Testis (tissue), 5 donors: ENCODE measurements at regions of chr11 and their contacts with region 1.

Region 1: GRCh38 chr11:1515082-1516060 is 28.8 kb upstream of the MOB2 start:
- DNase-seq: peak; percentile 82
- H3K4me3 ChIP-seq: no peak overlapping the region
- H3K27ac ChIP-seq: no peak overlapping the region
- H3K4me1 ChIP-seq: peaks cover 27% of the 10 kb centered on the region
- H3K27me3 ChIP-seq: no peaks in the 10 kb centered on the region
- CTCF ChIP-seq: peak; percentile 91 to 96 (median 92)
- POLR2A ChIP-seq: no peak

Region 2: DNA sequence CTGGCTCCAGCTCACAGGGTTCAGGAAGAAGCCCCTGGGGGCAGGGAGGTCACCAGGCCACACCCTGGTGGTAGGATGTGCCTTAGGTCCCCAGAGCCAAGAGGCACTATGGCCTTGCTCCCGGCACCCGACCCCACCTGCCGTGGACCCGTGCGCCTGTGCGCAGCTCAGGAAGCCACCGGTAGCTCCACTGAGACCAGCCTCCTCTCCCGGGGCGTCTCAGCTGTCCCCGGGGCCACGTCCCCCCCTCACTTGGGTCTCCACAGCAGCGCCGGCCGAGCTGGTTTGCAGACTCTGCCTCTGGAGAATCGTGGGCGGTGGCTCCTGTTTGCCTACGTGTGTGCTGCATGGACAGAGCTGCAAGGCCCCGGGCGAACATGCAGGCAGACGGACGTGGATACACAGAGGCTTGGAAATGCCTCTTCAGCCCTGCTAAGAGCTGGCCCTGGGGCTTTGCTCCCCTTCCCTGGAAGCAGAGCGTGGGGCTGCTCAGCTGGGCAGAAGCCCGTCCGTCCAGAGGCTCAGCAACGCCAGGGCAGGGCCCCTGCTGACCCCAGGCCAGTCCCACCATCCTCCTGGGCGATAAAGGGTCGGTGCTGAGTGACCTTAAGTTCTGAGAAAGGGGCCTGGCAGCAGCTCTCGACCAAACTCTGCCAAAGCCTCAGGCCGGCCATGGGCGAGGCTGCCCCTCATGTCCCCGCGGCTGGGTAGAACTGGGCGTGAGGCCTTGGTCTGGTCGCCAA is 307.8 kb before region 1 on chr11:
- intact Hi-C with region 1: loop called (anchors 5 kb)
- DNase-seq: no peak
- H3K4me3 ChIP-seq: no peak overlapping the region
- H3K27ac ChIP-seq: no peak overlapping the region
- H3K4me1 ChIP-seq: no peaks in the 10 kb centered on the region
- H3K27me3 ChIP-seq: no peaks in the 10 kb centered on the region
- CTCF ChIP-seq: no peak
- POLR2A ChIP-seq: no peak

Region 3: GRCh38 chr11:1598816-1599215 is 83.4 kb after region 1 on chr11:
- intact Hi-C with region 1: no loop called
- DNase-seq: no peak
- H3K4me3 ChIP-seq: no peak overlapping the region
- H3K27ac ChIP-seq: no peak overlapping the region
- H3K4me1 ChIP-seq: no peaks in the 10 kb centered on the region
- H3K27me3 ChIP-seq: no peaks in the 10 kb centered on the region
- CTCF ChIP-seq: no peak
- POLR2A ChIP-seq: no peak